ENCODE measurements at regions of chr3 and their contacts with region 1.

Region 1: DNA sequence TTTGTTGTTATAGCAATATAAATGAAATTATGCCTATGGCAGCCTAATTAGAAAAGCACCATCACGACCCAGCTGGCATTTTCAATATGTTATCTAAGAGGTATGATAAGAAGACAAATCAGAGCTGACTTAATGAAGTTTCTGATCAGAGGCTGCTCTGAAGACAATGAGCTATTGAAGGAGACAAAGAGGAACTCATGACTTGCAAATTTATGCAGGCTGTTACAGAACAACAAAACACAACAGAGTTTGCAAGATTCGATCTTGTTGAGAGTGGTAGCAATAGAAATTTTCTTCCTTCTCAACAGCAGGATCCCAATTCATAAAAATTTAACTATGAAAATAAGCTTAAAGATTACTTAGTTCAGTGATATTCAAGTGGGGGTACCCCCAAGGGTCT is 7.7 kb downstream of the CCDC54 start:
- DNase-seq: no peak
- H3K4me3 ChIP-seq: peak overlapping the region in 14 of 59 donors; percentile 2 to 33 (median 17)
- H3K27ac ChIP-seq: peak overlapping the region in 58 of 59 donors; percentile 50 to 99 (median 94)
- H3K27me3 ChIP-seq: no peaks in the 10 kb centered on the region
- CTCF ChIP-seq: peak in 2 of 56 donors; percentile 9 to 30

Region 2: GRCh38 chr3:107216711-107217110 is 168.2 kb before region 1 on chr3:
- intact Hi-C with region 1: no loop called
- DNase-seq: peak in 3 of 10 donors; percentile 26 to 56 (median 46)
- H3K4me3 ChIP-seq: peak overlapping the region in 1 of 59 donors; percentile 3
- H3K27ac ChIP-seq: peak overlapping the region in 58 of 59 donors; percentile 5 to 90 (median 78)
- H3K27me3 ChIP-seq: no peaks in the 10 kb centered on the region
- CTCF ChIP-seq: no peak

Region 3: DNA sequence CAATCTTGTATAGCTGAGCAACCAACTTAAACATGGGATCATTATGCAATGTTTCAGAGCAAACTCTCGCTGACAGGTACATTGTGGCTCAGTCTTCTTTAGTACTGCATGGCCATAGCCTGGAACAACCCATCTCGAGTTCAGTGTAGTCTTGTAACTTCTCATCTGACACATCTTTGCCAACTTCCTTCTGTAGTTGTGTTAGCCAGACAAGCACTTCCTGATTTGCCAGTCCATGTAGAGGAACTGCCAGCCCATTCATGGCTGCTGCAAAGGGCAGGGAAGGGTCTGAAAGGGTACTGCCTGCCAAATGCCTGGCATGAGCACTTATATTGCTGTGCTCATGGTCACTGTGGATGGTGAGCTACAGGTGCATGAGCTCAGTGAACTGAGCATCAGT is 56.8 kb before region 1 on chr3:
- intact Hi-C with region 1: no loop called
- DNase-seq: no peak
- H3K4me3 ChIP-seq: no peak overlapping the region
- H3K27ac ChIP-seq: no peak overlapping the region
- H3K27me3 ChIP-seq: no peaks in the 10 kb centered on the region
- CTCF ChIP-seq: no peak

Region 4: DNA sequence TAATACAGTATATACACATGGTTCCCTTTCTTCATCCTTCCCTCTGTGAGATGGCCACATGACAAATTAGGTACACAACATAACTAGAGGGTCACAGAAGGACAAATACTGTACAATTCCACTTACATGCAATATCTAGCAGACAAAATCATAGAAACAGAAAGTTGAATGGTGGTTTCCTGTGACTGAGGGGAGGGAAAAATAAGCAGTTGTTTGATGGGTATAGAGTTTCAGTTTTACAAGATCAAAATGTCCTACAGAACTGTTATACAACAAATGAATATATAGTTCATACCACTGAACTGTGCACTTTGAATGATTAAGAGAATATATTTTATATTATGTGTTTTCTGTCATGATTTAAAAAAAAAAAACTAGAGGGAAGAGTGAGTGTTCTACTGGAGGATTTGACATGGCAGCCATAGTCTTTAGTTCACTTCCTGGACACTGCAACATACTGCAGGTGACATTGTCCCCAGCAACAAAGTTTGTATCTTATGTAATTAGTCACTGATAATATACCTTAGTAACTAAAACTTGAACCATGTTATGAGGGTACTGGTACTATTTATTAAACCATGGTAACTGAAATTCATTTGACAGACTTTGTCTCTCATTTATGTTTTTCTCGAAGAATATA is 29.5 kb after region 1 on chr3:
- intact Hi-C with region 1: loop called in 1 of 2 experiments (anchors 5 kb)
- DNase-seq: no peak
- H3K4me3 ChIP-seq: no peak overlapping the region
- H3K27ac ChIP-seq: no peak overlapping the region
- H3K27me3 ChIP-seq: no peaks in the 10 kb centered on the region
- CTCF ChIP-seq: no peak